A673 (cell line): ENCODE measurements at regions of chr2 and their contacts with region 1.

Region 1: DNA sequence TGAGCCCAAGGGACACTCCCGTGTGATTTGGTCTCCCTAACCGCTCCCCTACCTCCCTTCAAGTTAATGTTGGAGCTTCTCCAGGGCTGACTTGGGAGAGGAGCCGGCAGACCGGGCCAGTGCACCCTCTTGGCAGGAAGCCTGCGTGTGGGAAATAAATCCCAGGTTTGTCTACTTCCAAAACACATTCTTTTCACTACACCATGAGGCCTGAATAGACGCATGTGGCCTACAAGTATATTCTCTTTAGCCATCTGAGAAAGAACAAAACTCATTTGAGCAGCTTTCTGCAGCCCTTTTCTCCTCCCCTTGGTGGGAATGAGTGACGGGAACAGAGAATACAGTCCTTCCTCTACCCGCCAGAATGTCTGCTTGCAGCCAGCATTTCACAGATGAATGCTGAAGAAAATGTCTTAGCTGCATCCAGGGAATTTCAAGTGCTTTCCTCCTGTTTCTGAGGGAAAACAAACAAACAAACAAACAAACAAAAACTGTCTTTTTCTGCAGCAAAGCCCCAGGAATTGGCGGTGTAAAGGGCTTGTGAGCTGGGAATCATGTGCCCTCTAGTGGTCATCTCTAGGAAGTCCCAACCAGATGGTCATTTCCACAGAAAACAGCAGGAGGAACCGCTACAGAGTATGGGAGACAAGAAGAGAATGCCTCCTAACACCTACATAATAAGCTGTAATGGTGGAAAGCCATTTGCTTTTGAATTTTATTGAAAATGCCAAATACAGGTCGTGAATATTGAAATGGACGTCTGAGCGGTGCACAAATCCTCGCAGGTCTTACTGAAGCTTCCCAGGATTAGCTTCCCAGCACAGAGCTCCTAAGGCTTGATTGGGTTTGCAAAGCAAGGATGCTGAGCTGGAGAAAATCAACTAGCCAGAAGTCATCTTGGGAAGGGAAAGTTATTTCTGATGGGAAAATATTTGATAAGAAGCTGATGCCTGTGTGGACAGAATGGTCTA is 41.2 kb upstream of the DAPL1 start:
- DNase-seq: peak; percentile 71
- H3K4me3 ChIP-seq: no peak overlapping the region
- H3K27ac ChIP-seq: no peak overlapping the region
- H3K4me1 ChIP-seq: no peaks in the 10 kb centered on the region
- H3K27me3 ChIP-seq: no peaks in the 10 kb centered on the region
- CTCF ChIP-seq: peak; percentile 94

Region 2: GRCh38 chr2:157497638-157498314 is 1256.2 kb before region 1 on chr2:
- CTCF ChIA-PET with region 1: no interaction called
- POLR2A ChIA-PET with region 1: no interaction called
- intact Hi-C with region 1: loop called (anchors 5 kb)
- DNase-seq: peak; percentile 61
- H3K4me3 ChIP-seq: no peak overlapping the region
- H3K27ac ChIP-seq: no peak overlapping the region
- H3K4me1 ChIP-seq: no peaks in the 10 kb centered on the region
- H3K27me3 ChIP-seq: no peaks in the 10 kb centered on the region
- CTCF ChIP-seq: peak; percentile 86

Region 3: DNA sequence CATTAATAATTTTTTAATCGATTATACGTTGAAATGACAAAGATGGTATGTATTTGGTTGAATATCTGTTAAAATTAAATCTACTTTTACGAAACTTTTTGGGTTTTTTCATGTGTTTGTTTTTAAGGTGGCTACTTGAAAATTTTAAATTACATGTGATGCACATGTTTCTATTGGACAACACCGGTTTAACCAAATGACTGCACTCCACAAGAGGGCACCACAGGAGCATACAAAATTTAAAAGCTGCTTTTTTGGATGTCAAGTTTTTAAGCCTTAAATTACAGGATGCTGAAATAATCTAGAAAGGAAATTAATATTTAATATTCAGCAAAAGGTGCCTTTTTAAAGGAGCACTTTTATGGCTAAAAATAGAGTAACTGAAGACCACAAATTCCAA is 976.5 kb before region 1 on chr2:
- CTCF ChIA-PET with region 1: no interaction called
- POLR2A ChIA-PET with region 1: no interaction called
- intact Hi-C with region 1: loop called (anchors 5 kb)
- DNase-seq: peak; percentile 70
- H3K4me3 ChIP-seq: no peak overlapping the region
- H3K27ac ChIP-seq: no peak overlapping the region
- H3K4me1 ChIP-seq: peaks cover 27% of the 10 kb centered on the region
- H3K27me3 ChIP-seq: no peaks in the 10 kb centered on the region
- CTCF ChIP-seq: peak; percentile 75

Region 4: GRCh38 chr2:158024288-158024898 is 729.5 kb before region 1 on chr2:
- CTCF ChIA-PET with region 1: interaction called, 10 read pairs
- POLR2A ChIA-PET with region 1: no interaction called
- intact Hi-C with region 1: loop called (anchors 1 kb)
- DNase-seq: peak; percentile 69
- H3K4me3 ChIP-seq: no peak overlapping the region
- H3K27ac ChIP-seq: no peak overlapping the region
- H3K4me1 ChIP-seq: peaks cover 1% of the 10 kb centered on the region
- H3K27me3 ChIP-seq: no peaks in the 10 kb centered on the region
- CTCF ChIP-seq: peak; percentile 94

Region 5: GRCh38 chr2:158034199-158034866 is 719.6 kb before region 1 on chr2:
- CTCF ChIA-PET with region 1: no interaction called
- POLR2A ChIA-PET with region 1: no interaction called
- intact Hi-C with region 1: loop called (anchors 2 kb)
- DNase-seq: peak; percentile 87
- H3K4me3 ChIP-seq: no peak overlapping the region
- H3K27ac ChIP-seq: no peak overlapping the region
- H3K4me1 ChIP-seq: peaks cover 18% of the 10 kb centered on the region
- H3K27me3 ChIP-seq: no peaks in the 10 kb centered on the region
- CTCF ChIP-seq: peak; percentile 74

Region 6: DNA sequence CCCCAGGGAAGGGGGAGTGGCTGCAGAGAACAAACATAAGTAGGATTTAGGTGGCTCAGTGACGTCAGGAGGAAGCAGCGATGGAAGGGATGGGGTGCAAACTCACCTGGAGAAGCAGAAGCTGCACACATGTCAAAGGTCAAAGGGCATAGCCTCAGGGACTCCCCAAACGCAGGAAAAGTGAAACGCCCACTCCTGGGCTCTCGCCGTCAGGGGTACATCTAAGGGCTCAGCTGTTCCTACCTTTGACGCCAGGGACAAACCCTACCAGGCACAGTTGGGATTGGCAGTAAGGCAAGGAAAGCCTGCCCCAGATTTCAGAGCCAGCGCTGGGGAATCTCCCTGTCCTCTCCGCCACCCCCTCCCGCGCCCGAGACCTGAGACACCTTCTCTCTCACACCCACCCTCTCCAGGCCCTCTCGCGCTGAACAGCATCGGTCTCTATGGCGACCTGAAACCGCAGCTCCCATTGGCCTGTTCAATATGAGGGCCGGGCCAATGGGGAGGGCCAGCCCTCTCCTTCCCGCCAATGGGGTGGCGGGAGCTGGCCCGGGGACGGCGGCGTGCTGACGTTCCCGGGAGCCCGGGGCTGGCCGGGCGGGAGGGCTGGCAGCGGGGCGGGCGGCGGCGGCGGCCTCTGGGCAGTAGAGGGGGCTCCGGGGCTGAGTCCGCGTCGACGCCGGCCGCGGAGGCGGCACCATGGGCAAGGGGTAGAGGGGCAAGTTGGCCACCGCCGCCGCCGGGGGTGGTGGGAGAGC is 297.4 kb before region 1 on chr2 and contains the starts of genes CCDC148 and PKP4:
- CTCF ChIA-PET with region 1: no interaction called
- POLR2A ChIA-PET with region 1: no interaction called
- intact Hi-C with region 1: loop called (anchors 5 kb)
- DNase-seq: peak; percentile 97
- H3K4me3 ChIP-seq: peak within 1 kb of the TSS; percentile 96
- H3K27ac ChIP-seq: peak within 1 kb of the TSS; percentile 78
- H3K4me1 ChIP-seq: peaks cover 30% of the 10 kb centered on the region
- H3K27me3 ChIP-seq: no peaks in the 10 kb centered on the region
- CTCF ChIP-seq: no peak
- total RNA-seq, gene CCDC148: 0.90 and 0.92 TPM in 2 replicates
- total RNA-seq, gene PKP4: 67.7 and 79.3 TPM in 2 replicates